Left lung (tissue), 14 donors: ENCODE measurements at regions of chr7 and their contacts with region 1.

Region 1: DNA sequence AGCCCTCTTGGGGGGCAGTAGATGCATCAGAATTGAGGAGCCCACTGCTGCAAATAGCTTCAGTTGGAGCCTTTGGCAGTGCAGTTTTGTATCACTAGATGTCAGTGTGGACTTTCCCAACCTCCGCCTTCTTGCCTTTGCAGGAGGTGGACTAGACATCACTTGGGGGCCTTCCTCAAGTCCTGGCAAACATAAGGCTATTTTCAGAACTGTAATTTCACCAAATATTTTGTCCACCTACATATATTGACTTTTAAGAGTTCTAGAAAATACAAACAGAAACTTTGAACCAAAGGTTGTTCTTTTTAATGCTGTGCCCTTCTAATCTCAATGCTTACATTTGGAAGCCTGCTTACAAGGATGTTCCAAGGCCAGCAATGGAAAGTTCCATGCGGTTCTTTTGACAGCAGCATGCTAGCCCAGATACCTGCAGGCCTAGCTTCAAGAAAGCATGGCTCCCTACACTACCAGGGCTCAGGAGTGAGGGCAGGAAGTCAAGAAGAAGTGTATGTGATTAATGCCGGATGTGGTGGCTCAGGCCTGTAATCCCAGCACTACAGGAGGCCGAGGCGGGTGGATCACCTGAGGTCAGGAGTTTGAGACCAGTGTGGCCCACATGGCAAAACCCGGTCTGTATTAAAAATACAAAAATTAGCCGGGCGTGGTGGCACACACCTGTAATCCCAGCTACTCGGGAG is 8.0 kb upstream of the ZNRF2 start:
- DNase-seq: peak in 1 of 4 donors; percentile 65
- ATAC-seq: peak; percentile 64
- H3K4me3 ChIP-seq: no peak overlapping the region
- H3K27ac ChIP-seq: no peak overlapping the region
- H3K4me1 ChIP-seq: peaks cover 0 to 4% of the 10 kb centered on the region in 2 donors
- H3K27me3 ChIP-seq: no peaks in the 10 kb centered on the region
- CTCF ChIP-seq: peak; percentile 43 to 45

Region 2: GRCh38 chr7:30164567-30164966 is 111.8 kb before region 1 on chr7:
- intact Hi-C with region 1: loop called in 1 of 2 experiments (anchors 10 kb)
- DNase-seq: peak in 1 of 4 donors; percentile 77
- ATAC-seq: peak; percentile 64
- H3K4me3 ChIP-seq: no peak overlapping the region
- H3K27ac ChIP-seq: no peak overlapping the region
- H3K4me1 ChIP-seq: peaks cover 5 to 75% of the 10 kb centered on the region in 2 donors
- H3K27me3 ChIP-seq: no peaks in the 10 kb centered on the region
- CTCF ChIP-seq: peak in 1 of 2 donors; percentile 36

Region 3: GRCh38 chr7:30412810-30413504 is 136.6 kb after region 1 on chr7:
- intact Hi-C with region 1: loop called in 1 of 2 experiments (anchors 5 kb)
- DNase-seq: peak in 2 of 4 donors; percentile 39 to 64
- ATAC-seq: peak; percentile 98
- H3K4me3 ChIP-seq: no peak overlapping the region
- H3K27ac ChIP-seq: no peak overlapping the region
- H3K4me1 ChIP-seq: no peaks in the 10 kb centered on the region
- H3K27me3 ChIP-seq: no peaks in the 10 kb centered on the region
- CTCF ChIP-seq: peak; percentile 21 to 70